Activated T-helper 2 cell treated with anti-CD3 and anti-CD28 coated beads, Interferon-gamma antibody, Interleukin-2, Interleukin-4, amounts not matched to agents 10 μg/mL and 5 μg/mL and 100 μg/mL, durations not matched to agents 14 hours and 24 hours and 36 hours (primary cell): ENCODE measurements at regions of chr5 and their contacts with region 1.

Region 1: GRCh38 chr5:59099270-59099994 is 516.6 kb downstream of the RAB3C start:
- DNase-seq: peak; percentile 62
- H3K4me3 Mint-ChIP-seq: peak overlapping the region; percentile 22
- H3K27ac Mint-ChIP-seq: peak overlapping the region; percentile 85
- H3K4me1 Mint-ChIP-seq: peaks cover 80% of the 10 kb centered on the region
- H3K27me3 Mint-ChIP-seq: no peaks in the 10 kb centered on the region

Region 2: GRCh38 chr5:58855851-58856739 is 243.3 kb before region 1 on chr5:
- intact Hi-C with region 1: no loop called
- DNase-seq: no peak
- H3K4me3 Mint-ChIP-seq: no peak overlapping the region
- H3K27ac Mint-ChIP-seq: no peak overlapping the region
- H3K4me1 Mint-ChIP-seq: peaks cover 6% of the 10 kb centered on the region
- H3K27me3 Mint-ChIP-seq: peaks cover 26% of the 10 kb centered on the region

Region 3: DNA sequence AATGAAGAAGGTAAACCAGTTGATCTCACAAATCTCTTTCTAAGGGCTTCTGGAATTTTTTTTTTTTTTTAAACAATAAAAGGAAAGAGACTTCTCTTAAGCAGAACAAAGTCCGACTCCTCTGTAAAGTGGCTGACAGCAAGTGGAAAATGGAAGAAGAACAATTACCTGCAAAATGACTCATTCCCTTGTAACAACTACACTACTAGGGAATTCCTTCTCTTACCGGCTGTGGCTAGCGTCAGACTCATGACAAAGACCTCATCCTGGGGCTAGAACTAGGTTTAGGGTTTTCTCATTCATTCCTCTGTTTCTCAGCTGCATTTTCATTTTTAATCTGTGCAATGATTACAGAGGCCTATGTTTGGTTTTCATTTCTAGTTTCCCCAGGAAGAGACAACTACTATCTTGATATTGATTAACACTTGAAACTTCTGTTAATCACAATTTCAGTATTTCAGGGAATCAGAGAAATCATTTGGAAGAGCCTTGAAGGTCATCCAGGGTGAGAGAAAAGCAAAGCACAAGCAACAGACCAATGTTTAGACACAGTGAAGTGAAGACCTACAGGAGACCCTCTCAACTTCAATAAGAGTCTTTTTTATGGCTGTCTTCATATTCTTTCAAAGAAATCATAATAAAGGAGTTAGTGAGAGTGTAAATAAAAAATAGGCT is 78.7 kb before region 1 on chr5:
- intact Hi-C with region 1: loop called (anchors 2 kb)
- DNase-seq: no peak
- H3K4me3 Mint-ChIP-seq: peak overlapping the region; percentile 32
- H3K27ac Mint-ChIP-seq: peak overlapping the region; percentile 93
- H3K4me1 Mint-ChIP-seq: peaks cover 54% of the 10 kb centered on the region
- H3K27me3 Mint-ChIP-seq: no peaks in the 10 kb centered on the region

Region 4: GRCh38 chr5:59152701-59153245 is 53.3 kb after region 1 on chr5:
- intact Hi-C with region 1: loop called (anchors 1 kb)
- DNase-seq: no peak
- H3K4me3 Mint-ChIP-seq: peak overlapping the region; percentile 16
- H3K27ac Mint-ChIP-seq: no peak overlapping the region
- H3K4me1 Mint-ChIP-seq: peaks cover 22% of the 10 kb centered on the region
- H3K27me3 Mint-ChIP-seq: no peaks in the 10 kb centered on the region

Region 5: DNA sequence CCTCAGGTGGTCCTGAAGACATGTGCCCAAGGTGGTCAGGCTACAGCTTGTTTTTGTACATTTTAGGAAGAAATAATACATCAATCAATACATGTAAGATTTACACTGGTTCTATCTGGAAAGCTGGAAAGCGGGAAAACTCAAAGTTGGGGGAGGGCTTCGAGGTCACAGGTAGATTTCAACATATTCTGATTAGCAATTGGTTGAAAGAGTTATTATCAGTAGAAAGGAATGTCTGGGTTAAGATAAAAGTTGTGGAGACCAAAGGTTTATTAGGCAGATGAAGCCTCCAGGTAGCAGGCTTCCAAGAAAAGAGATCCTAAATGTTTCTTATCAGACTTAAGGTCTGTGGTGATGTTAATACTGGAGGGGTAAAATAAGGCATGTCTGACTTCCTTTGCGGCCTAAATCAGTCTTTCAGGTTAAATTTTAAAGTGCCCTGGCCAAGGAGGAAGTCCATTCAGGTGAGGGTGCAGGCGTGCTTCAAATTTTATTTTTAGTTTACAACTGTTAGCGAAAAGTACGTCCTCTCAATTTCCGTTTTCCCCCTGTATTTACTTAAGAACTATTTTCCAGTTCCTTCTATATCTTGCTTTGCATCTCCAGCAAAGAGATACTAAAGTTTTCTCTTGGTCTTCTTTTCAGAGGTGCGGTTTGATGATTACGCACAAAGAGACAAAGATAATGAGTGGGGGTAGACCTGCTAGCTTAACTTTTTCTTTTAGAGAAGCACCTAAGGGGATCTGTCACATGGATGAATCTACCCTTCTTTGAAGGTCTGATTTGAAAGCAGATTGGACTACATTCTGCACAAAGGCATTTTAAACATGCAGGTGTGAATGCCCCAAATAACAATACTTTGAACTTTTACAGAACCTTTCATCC is 62.0 kb after region 1 on chr5:
- intact Hi-C with region 1: loop called (anchors 2 kb)
- DNase-seq: no peak
- H3K4me3 Mint-ChIP-seq: no peak overlapping the region
- H3K27ac Mint-ChIP-seq: peak overlapping the region; percentile 48
- H3K4me1 Mint-ChIP-seq: peaks cover 34% of the 10 kb centered on the region
- H3K27me3 Mint-ChIP-seq: no peaks in the 10 kb centered on the region

Region 6: DNA sequence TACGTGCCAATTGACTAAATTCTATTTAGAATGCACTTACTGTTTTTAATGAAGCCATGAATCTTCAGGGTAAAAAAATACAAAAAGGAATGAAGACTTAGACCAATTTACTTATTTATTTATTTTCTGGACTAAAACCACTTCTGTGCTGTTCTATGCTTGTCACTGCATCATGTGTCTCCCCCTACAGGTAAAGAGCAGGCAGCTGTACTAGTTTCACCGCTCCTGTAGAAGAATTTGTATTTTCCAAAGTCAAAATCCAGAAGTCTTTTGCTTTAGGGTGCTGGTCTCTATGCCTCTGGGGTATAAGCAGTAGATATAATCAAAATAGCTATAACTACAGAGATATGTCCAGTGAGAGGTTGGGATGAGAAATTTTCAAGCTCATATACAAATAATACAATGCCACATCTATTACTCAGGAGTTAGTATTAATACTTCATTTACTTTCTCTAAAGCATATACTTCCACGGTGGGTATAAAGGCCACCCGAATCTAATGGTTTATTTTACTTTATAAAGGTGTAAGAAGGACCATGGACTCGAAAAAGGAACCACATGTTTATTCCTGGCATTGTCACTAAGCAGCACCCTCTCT is 74.9 kb after region 1 on chr5:
- intact Hi-C with region 1: loop called (anchors 2 kb)
- DNase-seq: no peak
- H3K4me3 Mint-ChIP-seq: no peak overlapping the region
- H3K27ac Mint-ChIP-seq: no peak overlapping the region
- H3K4me1 Mint-ChIP-seq: peaks cover 43% of the 10 kb centered on the region
- H3K27me3 Mint-ChIP-seq: no peaks in the 10 kb centered on the region

Region 7: DNA sequence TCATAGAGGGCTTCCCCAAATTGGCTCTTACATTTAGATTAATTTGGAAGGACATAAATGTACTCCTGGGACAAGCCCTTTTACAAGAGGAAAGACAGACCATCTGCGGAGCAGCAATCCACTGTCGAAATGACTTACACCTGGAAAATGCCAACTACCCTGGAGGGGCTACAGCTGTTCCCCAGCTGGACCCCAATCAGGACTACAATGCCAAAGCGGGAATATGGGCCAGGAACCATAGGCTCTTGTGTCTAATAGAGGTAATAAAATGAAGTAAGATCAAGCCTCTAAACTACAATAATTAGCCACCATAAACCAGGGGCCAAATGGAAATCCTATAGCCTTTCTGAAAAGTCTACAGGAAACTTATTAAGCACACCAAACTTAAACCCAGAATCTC is 212.8 kb after region 1 on chr5:
- intact Hi-C with region 1: no loop called
- DNase-seq: no peak
- H3K4me3 Mint-ChIP-seq: no peak overlapping the region
- H3K27ac Mint-ChIP-seq: no peak overlapping the region
- H3K4me1 Mint-ChIP-seq: no peaks in the 10 kb centered on the region
- H3K27me3 Mint-ChIP-seq: no peaks in the 10 kb centered on the region